ENCODE measurements at regions of chr10 and their contacts with region 1.

Region 1: DNA sequence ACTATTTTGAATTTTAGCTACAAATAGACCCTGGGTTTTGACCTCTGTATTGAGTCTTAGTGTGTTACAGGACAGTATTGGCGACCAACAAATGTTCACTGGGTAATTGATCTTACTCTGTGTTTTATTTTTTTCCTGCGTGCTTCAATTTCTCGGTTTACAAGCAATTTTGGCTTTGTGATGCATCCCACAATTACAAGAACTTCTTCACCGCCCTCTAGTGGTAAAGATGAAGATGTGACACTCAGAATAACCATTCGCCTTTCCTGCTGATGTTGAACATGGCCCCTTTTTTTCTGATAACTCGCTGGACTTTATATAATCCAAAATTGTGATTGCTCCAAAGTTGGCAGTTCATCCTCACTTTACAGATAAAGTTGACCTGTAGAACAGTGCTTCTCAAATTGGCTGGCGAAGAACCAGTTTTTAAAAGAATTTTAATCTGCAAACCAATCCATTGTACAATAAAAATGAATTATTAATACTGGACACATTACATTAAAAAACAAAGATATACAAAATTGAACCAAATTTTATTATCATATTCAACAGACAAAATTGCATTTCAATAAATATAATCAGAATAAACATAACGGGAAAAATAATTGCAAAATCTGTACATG is 20.2 kb upstream of the SMC3 start:
- DNase-seq: no peak
- H3K4me3 Mint-ChIP-seq: no peak overlapping the region
- H3K27ac Mint-ChIP-seq: peak overlapping the region; percentile 3
- H3K4me1 Mint-ChIP-seq: peaks cover 29% of the 10 kb centered on the region
- H3K27me3 Mint-ChIP-seq: peaks cover 23% of the 10 kb centered on the region

Region 2: GRCh38 chr10:110311357-110311949 is 235.8 kb before region 1 on chr10:
- intact Hi-C with region 1: loop called (anchors 1 kb)
- DNase-seq: no peak
- H3K4me3 Mint-ChIP-seq: no peak overlapping the region
- H3K27ac Mint-ChIP-seq: no peak overlapping the region
- H3K4me1 Mint-ChIP-seq: peaks cover 51% of the 10 kb centered on the region
- H3K27me3 Mint-ChIP-seq: no peaks in the 10 kb centered on the region

Region 3: DNA sequence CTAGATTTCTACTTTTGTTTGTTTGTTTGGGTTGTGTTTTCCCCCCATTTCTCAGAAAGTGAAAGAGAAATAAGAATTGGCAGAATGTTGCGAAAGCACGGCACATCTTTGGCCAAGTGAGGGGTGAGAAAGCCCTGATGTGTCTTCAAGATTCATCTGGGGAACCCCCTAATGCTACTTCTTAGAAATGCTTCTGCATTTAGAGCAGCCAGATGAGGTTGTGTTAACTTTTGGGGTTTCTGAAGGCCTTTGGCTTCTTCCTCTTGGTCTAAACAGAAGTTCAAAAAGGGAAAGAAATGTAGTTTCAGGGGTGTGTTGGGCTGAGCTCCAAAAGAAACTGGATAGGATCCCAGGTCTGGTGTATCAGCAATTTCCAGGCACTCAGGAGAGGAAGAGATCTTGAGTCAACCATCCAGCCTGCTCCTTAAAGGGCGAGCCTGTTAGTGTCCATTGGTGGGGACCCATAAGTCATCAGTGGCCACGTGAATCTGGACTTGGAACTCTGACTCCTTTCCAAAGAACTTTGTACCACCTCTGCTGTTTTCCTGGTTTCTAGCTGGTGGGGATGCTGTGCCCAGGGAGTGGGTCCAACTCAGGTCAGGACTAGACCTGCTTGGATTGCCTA is 43.0 kb before region 1 on chr10:
- intact Hi-C with region 1: loop called (anchors 1 kb)
- DNase-seq: peak; percentile 77
- H3K4me3 Mint-ChIP-seq: peak overlapping the region; percentile 100
- H3K27ac Mint-ChIP-seq: peak overlapping the region; percentile 97
- H3K4me1 Mint-ChIP-seq: peaks cover 97% of the 10 kb centered on the region
- H3K27me3 Mint-ChIP-seq: no peaks in the 10 kb centered on the region

Region 4: DNA sequence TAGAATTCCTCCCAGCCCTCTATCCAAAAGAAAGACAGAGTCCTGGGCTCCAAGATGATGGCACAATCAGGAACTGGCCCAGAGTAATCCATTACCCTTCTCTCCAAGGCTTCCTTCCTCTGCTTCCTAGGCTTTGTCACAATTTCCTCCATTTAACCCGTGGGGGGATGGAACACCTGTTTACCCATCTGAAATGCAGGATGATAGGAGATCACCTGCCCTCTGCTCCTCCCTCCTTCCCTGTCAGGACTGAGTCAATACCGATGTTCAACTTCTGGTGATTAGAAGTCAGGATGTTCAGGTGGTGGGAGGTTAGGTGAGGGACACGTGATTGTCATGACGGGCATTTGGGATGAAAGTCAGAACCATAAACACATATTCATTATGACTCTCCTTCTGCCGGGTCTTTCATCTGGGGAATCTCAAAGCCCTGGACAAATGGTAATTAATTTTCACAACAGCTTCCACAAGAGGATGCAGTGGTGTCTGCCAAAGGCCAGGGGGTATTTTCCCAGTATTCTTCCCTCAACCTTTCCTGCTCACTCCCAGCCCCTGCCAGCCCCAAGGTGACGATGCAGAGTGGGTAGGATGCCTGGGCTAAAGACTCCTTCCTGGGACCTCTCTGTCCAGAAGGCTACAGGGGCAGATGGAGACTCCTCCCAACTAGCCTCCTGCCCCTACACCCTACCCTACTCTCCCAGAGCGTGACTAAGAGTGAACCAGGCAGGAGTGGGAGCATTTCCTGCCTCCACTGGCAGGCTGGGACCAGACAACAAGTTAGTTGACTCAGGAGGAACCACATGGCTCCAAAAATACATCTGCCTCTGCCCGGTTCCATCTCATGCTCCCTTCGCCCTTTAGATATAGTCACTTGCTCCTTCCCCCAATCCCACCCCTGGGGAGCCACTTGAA is 21.6 kb before region 1 on chr10:
- intact Hi-C with region 1: no loop called
- DNase-seq: no peak
- H3K4me3 Mint-ChIP-seq: no peak overlapping the region
- H3K27ac Mint-ChIP-seq: peak overlapping the region; percentile 46
- H3K4me1 Mint-ChIP-seq: peaks cover 83% of the 10 kb centered on the region
- H3K27me3 Mint-ChIP-seq: no peaks in the 10 kb centered on the region

Region 5: DNA sequence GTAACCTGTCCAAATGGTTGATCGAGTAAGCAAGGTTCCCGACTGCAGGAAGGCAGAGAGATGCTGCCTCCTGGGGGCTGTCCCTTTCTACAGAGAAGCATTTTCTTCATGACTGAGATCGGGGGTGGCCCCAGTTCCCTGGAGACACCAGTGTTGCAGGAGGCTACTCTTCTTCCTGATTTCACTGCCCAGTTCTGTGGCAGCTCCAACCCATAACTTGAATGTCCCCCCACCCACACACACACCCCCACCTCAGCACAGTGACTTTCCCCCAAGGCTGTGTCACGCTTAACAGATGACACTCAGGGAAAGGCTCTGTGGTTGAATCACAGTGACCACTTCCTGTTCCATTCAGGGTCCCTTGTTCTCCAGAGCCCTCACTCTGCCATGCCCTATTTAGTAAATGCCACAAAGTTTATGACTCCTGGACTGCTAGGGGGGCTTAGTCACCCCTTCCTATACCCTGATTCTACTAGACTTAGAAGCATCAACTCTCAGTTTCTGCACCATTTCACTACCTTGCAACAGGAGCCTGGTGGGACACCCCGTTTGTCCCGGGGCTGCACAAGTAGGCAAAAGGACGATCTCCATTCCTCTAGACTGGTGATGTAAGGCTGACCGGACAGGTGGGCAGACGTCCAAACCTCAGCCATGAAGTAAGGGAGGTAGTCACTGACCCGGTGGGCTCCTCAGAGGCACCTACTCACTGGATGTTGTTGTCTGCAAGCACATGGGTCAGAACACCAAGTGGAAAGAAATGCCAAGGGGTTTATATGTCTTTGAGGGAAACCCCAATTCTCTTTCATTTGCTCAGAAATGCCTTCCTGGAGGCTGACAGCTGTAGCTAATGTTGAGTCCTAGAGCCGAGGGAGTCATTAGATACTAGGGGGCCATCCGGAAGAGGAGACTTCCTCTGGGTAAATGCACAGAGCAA is 11.0 kb before region 1 on chr10:
- intact Hi-C with region 1: loop called (anchors 1 kb)
- DNase-seq: peak; percentile 49
- H3K4me3 Mint-ChIP-seq: peak overlapping the region; percentile 48
- H3K27ac Mint-ChIP-seq: peak overlapping the region; percentile 89
- H3K4me1 Mint-ChIP-seq: peaks cover 60% of the 10 kb centered on the region
- H3K27me3 Mint-ChIP-seq: no peaks in the 10 kb centered on the region

Region 6: DNA sequence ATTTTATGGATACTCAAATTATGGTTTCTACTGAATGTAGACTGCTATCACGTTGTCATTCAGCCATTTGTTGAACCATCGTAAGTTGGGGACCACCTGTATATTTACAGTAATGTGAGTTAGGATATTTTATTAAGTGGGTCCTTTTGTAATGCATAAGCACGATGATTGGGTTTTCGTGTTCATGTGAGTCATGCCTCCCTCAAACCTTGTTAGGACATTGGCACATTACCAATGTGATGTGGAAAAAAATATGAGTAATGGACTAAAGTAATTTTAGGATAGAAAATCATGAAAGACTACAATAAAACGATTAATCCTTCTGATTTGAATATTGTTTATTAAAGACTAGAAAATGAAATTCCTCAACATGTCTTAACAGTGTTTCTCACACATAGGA is 29.0 kb after region 1 on chr10:
- intact Hi-C with region 1: no loop called
- DNase-seq: no peak
- H3K4me3 Mint-ChIP-seq: no peak overlapping the region
- H3K27ac Mint-ChIP-seq: no peak overlapping the region
- H3K4me1 Mint-ChIP-seq: peaks cover 39% of the 10 kb centered on the region
- H3K27me3 Mint-ChIP-seq: no peaks in the 10 kb centered on the region

Region 7: DNA sequence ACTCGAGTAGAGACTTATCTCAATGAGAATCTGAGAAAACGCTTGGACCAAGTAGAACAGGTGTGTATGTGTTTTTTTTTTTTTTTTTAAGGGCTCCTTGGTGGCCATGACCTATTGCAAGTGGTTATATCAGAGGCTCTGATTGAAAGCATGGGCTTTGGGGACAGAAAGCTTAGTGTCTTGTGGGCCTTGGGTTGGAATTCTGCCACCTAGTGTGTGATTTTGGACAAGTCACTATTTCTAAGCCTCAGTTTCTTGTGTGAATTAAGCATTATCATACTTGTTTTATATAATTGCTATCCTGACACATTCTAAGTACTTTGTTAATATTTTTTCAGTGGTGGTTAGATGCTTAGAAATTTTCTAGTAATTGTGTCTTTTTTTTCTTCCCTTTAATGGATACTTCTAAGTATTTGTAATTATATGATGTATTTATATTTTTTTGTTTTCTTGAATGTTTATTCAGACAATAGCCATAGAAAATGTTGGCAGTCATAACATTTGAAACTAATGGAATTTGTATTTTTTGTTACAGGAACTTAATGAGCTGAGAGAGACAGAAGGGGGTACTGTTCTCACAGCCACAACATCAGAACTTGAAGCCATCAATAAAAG is 53.3 kb after region 1 on chr10:
- intact Hi-C with region 1: loop called (anchors 2 kb)
- DNase-seq: peak; percentile 24
- H3K4me3 Mint-ChIP-seq: no peak overlapping the region
- H3K27ac Mint-ChIP-seq: no peak overlapping the region
- H3K4me1 Mint-ChIP-seq: no peaks in the 10 kb centered on the region
- H3K27me3 Mint-ChIP-seq: no peaks in the 10 kb centered on the region

Region 8: DNA sequence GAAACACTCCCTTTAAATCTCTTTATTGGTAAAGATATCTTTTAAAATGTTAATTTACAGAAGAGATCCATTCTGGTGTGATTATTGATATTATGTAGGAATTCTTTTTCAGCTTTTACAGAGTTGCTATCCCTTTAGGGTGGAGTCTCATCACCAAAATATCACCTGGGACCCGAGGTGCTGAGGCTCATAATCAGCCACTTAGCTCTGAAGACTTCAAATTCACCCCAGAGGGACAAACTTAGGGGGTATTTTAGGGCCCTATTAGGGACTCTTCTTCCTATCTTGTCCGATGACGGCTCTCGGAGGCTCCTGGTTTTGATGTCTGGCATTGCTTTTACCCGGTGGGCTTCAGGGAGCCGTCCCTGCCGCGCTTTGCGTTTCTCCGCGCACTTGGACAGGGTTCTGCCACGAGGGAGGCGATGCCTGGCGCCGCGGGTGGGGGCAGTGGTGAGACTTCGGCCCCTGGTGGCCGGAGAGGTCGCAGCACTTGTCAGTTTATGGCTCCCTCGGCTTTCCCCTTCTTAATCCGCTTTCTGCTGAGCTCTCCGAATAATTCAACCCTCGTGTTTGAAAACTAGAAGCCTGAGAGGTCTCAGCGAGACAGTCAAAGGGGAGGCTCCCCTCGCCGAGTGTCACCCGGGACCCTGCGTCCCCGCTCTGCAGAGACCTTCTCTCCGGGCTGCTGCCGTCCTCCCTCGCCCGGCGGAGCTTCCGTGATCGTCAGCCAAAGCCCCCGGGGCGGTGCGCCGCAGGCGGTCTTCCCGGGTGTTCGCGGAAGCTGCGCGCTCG is 124.7 kb after region 1 on chr10:
- intact Hi-C with region 1: no loop called
- DNase-seq: peak; percentile 44
- H3K4me3 Mint-ChIP-seq: peak overlapping the region; percentile 81
- H3K27ac Mint-ChIP-seq: peak overlapping the region; percentile 36
- H3K4me1 Mint-ChIP-seq: peaks cover 5% of the 10 kb centered on the region
- H3K27me3 Mint-ChIP-seq: peaks cover 54% of the 10 kb centered on the region

Measured in activated T-helper 1 cell treated with anti-CD3 and anti-CD28 coated beads, Interleukin-12 subunit alpha, Interleukin-12 subunit beta, Interleukin-2, Interleukin-4 antibody, amounts not matched to agents 30 ng/mL and 10 ng/mL and 1 ng/mL, durations not matched to agents 14 hours and 24 hours and 36 hours (primary cell).